ENCODE measurements at regions of chr9 and their contacts with region 1.

Region 1: GRCh38 chr9:112486221-112487007 is at the start of gene KIAA1958:
- DNase-seq: peak; percentile 94
- ATAC-seq: peak; percentile 96
- H3K4me3 Mint-ChIP-seq: peak within 1 kb of the TSS; percentile 95
- H3K27ac Mint-ChIP-seq: peak within 1 kb of the TSS; percentile 90
- H3K4me1 Mint-ChIP-seq: peaks cover 30% of the 10 kb centered on the region
- H3K27me3 Mint-ChIP-seq: no peaks in the 10 kb centered on the region
- total RNA-seq, gene KIAA1958: 7.1 to 11.6 TPM

Region 2: DNA sequence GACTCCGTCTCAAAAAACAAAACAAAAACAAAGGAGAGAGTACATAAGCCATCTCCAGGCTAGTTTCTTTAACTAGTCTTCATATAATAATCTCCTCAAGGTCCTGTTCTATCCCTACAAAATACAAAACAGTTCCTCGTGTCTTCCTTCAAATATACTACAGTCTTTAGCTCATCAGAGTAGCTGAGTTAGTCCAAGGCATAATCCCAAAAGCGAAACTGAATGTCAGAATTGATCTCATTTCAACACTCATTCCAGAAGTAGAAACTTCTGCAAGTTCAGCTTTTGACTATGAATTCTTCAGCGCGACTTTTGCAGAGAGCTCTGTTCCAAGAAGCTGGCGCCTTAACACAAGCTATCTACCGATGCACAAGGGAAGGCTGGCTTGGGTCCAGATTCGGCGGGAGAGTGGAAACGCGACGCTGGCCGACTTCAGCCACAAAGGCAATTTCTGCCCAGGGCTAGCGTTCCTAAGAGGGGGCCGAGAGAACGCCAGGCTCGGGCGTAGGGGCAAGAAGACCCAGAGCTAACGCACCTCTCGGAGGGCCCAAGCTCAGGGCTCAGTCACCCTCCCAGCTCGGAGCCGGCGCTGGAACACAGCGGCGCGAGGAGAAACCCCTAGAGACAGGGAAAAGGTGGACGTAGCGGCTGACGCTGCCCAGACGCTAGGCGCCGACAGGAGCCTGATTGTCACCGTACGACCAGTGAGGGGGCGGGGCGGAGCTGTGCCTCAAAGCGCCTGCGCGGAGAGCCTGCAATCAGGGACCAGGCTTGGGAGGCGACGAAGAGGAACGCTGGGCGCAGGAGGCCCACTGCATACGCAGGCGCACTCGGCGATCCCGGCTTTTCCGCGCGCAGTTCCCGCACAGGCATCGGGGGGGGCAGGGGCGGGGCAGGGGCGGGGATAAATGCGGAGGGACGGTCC is 107.0 kb before region 1 on chr9:
- CTCF ChIA-PET with region 1: interaction called, 11 read pairs
- DNase-seq: peak; percentile 99
- ATAC-seq: peak; percentile 93
- H3K4me3 Mint-ChIP-seq: peak overlapping the region; percentile 90
- H3K27ac Mint-ChIP-seq: peak overlapping the region; percentile 99
- H3K4me1 Mint-ChIP-seq: peaks cover 50% of the 10 kb centered on the region
- H3K27me3 Mint-ChIP-seq: no peaks in the 10 kb centered on the region

Region 3: DNA sequence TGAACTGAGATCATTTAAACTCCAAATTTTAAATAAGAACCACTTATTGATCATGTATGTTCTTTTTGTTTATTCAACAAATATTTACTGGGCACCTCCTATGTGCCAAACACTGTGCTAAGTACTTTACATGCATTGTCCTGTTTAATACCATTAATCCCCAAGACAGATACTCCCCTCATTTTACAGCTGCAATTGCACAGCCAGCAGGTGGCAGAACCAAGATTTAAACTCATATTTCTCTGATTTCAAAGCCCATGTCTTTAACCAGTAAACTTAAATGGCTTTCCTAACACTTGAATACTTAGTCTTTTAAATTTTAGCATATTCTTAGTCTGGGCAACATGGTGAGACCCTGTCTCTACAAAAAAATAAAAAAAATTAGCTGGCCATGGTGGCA is 43.2 kb before region 1 on chr9:
- CTCF ChIA-PET with region 1: interaction called, 12 read pairs
- DNase-seq: no peak
- ATAC-seq: peak; percentile 68
- H3K4me3 Mint-ChIP-seq: no peak overlapping the region
- H3K27ac Mint-ChIP-seq: no peak overlapping the region
- H3K4me1 Mint-ChIP-seq: peaks cover 2% of the 10 kb centered on the region
- H3K27me3 Mint-ChIP-seq: no peaks in the 10 kb centered on the region